Tibial artery (tissue), 4 donors: ENCODE measurements at regions of chr1 and their contacts with region 1.

Region 1: DNA sequence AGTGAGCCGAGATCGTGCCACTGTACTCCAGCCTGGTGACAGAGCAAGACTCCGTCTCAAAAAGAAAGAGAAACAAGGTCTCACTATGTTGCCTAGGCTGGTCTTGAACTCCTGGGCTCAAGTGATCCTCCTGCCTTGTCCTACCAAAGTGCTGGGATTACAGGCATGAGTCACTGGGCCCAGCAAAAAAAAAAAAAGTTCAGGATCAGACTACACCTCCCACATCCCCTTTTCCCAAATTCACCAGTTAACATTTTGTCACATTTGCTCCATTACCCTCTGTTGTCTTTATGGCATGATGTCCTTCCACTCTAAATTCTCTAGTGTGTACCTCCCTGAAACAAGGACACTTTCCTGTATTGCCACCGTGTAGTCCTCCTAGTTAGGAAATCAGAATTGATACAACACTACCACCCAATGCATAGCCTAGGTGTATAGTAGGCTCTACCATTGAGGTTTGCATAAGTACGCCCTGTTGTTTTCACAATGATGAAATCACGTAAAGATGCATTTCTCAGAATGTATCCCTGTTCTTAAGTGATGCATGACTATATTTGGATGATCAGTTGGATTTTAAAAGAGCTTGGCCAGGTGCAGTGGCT is 10.7 kb downstream of the SPEN start:
- DNase-seq: no peak
- H3K4me3 ChIP-seq: no peak overlapping the region
- H3K27ac ChIP-seq: no peak overlapping the region
- H3K4me1 ChIP-seq: peaks cover 0 to 81% (median 28%) of the 10 kb centered on the region in 4 donors
- H3K27me3 ChIP-seq: no peaks in the 10 kb centered on the region
- CTCF ChIP-seq: no peak

Region 2: DNA sequence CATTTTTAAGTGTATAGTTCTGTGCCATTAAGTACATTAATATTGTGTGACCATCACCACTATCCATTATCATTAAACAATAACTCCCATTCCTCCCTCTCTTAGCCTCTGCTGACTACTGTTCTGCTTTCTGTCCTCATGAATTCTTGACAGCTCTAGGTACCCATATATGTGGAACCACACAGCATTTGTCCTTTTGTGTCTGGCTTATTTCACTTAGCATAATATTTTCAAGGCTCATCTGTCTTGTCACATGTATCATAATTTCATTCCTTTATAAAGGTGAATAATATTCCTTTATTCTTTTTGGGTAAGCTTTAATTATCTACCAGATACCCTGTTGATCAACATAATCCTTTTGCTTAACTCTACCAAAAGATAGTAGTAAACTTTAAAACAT is 37.1 kb after region 1 on chr1:
- intact Hi-C with region 1: no loop called
- DNase-seq: no peak
- H3K4me3 ChIP-seq: no peak overlapping the region
- H3K27ac ChIP-seq: peak overlapping the region; percentile 74 to 81
- H3K4me1 ChIP-seq: peaks cover 0 to 90% (median 44%) of the 10 kb centered on the region in 4 donors
- H3K27me3 ChIP-seq: no peaks in the 10 kb centered on the region
- CTCF ChIP-seq: no peak

Region 3: DNA sequence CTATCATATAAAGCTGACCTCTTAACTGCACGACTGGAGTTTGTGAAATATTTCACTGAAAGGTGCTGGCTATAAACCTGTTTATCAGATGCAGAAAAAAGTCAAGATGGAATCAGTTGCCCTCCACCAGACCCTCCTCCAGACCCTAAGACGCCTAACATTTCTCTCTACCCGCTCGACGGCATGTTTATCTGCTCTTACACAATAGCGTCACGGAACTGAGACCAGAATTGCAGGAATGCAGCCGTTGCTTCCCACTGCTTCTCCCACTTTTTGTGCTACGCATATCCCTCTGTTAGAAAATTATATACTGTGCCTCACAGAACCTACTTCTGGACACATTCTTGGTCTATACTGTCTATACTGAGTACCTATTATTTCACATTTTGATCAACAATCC is 243.5 kb after region 1 on chr1:
- intact Hi-C with region 1: no loop called
- DNase-seq: no peak
- H3K4me3 ChIP-seq: no peak overlapping the region
- H3K27ac ChIP-seq: no peak overlapping the region
- H3K4me1 ChIP-seq: no peaks in the 10 kb centered on the region
- H3K27me3 ChIP-seq: no peaks in the 10 kb centered on the region
- CTCF ChIP-seq: no peak

Region 4: DNA sequence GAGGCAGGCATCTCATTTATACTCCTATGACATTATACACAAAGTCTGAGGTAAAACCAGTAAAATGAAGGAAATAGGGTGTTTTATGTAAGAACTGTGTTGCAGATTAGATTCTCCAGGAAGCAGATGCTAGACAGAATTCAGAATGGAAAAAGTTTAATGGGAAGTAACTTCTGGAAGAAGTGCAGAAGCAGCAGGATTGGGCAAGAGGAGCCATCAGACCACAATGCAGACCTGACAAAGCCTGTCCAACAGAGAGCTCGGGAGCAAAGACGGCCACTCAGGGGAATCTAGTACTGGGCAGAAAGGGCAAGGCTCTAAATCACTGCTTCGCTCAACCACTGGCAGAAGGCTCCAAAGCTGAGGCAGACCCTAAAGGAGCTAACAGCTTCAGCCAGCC is 460.4 kb after region 1 on chr1:
- intact Hi-C with region 1: loop called (anchors 5 kb)
- DNase-seq: peak; percentile 67 to 73
- H3K4me3 ChIP-seq: no peak overlapping the region
- H3K27ac ChIP-seq: peak overlapping the region; percentile 12 to 24
- H3K4me1 ChIP-seq: peaks cover 0 to 98% (median 54%) of the 10 kb centered on the region in 4 donors
- H3K27me3 ChIP-seq: no peaks in the 10 kb centered on the region
- CTCF ChIP-seq: no peak